Right ventricle myocardium superior (tissue), 1 donor: ENCODE measurements at regions of chr22 and their contacts with region 1.

Region 1: DNA sequence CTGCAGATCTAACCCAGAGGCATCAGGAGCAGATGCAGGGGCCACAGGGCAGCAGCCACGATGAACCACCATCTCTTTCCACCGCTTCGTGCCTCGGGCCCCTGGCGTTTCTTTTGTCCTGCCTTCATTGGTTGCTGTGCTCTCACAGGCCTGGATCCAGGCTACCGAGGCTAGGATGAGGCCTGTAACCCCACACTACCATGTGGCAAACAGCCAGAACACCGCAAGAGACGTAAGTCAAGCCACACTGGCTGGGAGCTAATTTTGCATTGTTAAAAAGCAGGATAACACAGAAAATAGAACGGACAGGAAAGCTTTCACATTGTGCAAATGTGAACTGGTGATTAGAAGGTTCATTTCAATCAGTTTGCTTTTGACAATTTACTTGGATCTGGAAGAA is 15.7 kb upstream of the ARFGAP3 start:
- DNase-seq: no peak
- ATAC-seq: no peak

Region 2: GRCh38 chr22:43090130-43090789 is 217.4 kb after region 1 on chr22:
- intact Hi-C with region 1: loop called (anchors 10 kb)
- DNase-seq: peak; percentile 60
- ATAC-seq: peak; percentile 55